Common myeloid progenitor, CD34-positive (primary cell): ENCODE measurements at regions of chr16 and their contacts with region 1.

Region 1: GRCh38 chr16:10521681-10522274 is 58.6 kb downstream of the EMP2 start:
- DNase-seq: peak; percentile 60 to 75 (median 70)
- H3K4me3 ChIP-seq: no peak overlapping the region
- H3K27ac ChIP-seq: no peak overlapping the region
- H3K4me1 ChIP-seq: no peaks in the 10 kb centered on the region
- H3K27me3 ChIP-seq: no peaks in the 10 kb centered on the region

Region 2: GRCh38 chr16:10600533-10601443 is 79.0 kb after region 1 on chr16:
- CTCF ChIA-PET with region 1: no interaction called
- POLR2A ChIA-PET with region 1: no interaction called
- DNase-seq: no peak
- H3K4me3 ChIP-seq: no peak overlapping the region
- H3K27ac ChIP-seq: no peak overlapping the region
- H3K4me1 ChIP-seq: peaks cover 0 to 8% (median 4%) of the 10 kb centered on the region in 4 experiments
- H3K27me3 ChIP-seq: peaks cover 0 to 6% (median 0%) of the 10 kb centered on the region in 5 experiments

Region 3: DNA sequence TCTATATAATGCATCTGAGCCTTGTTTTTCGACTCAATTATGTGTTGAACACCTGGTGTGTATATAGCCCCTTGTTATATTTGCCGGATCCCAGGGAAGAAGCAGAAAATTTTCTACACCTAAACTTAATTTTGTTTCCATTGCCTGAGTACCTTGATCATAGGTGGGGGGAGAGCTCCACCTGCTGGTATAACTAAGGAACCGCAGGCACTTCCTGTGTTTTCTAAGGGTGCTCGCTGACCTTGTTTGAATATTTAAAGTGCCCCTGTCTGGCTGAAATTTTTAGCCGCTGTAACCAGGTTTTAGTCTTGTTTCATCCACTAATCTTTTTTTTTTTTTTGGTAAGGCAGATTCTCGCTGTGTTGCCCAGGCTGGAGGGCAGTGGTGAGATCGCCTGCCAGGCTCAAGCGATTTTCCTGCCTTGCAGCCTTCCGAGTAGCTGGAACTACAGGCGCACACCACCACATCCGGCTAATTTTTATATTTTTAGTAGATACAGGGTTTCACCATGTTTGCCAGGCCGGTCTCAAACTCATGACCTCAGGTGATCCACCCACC is 215.4 kb after region 1 on chr16:
- CTCF ChIA-PET with region 1: interaction called, 80 read pairs
- POLR2A ChIA-PET with region 1: no interaction called
- DNase-seq: peak; percentile 72 to 85 (median 79)
- H3K4me3 ChIP-seq: peak overlapping the region in 3 of 7 experiments; percentile 26 to 61 (median 58)
- H3K27ac ChIP-seq: no peak overlapping the region
- H3K4me1 ChIP-seq: peaks cover 0 to 11% (median 4%) of the 10 kb centered on the region in 4 experiments
- H3K27me3 ChIP-seq: no peaks in the 10 kb centered on the region